ENCODE measurements at regions of chr9 and their contacts with region 1.

Region 1: GRCh38 chr9:111298731-111299598 is 31.1 kb downstream of the OR2K2 start:
- DNase-seq: peak; percentile 34
- H3K4me3 ChIP-seq: no peak overlapping the region
- CTCF ChIP-seq: peak; percentile 34

Region 2: GRCh38 chr9:110638381-110638954 is 660.5 kb before region 1 on chr9:
- CTCF ChIA-PET with region 1: interaction called, 48 read pairs
- POLR2A ChIA-PET with region 1: no interaction called
- DNase-seq: no peak
- H3K4me3 ChIP-seq: no peak overlapping the region
- CTCF ChIP-seq: no peak

Region 3: GRCh38 chr9:111037381-111038305 is 261.3 kb before region 1 on chr9:
- CTCF ChIA-PET with region 1: interaction called, 24 read pairs
- POLR2A ChIA-PET with region 1: interaction called, 3 read pairs
- DNase-seq: no peak
- H3K4me3 ChIP-seq: peak overlapping the region; percentile 83
- CTCF ChIP-seq: peak; percentile 9

Region 4: GRCh38 chr9:111330124-111330523 is 31.2 kb after region 1 on chr9 and contains the start of gene OR2K2:
- CTCF ChIA-PET with region 1: no interaction called
- POLR2A ChIA-PET with region 1: no interaction called
- DNase-seq: no peak
- H3K4me3 ChIP-seq: no peak within 1 kb of the TSS
- CTCF ChIP-seq: no peak

Measured in AG04449 (cell line).